PC-9 (cell line): ENCODE measurements at regions of chr2 and their contacts with region 1.

Region 1: DNA sequence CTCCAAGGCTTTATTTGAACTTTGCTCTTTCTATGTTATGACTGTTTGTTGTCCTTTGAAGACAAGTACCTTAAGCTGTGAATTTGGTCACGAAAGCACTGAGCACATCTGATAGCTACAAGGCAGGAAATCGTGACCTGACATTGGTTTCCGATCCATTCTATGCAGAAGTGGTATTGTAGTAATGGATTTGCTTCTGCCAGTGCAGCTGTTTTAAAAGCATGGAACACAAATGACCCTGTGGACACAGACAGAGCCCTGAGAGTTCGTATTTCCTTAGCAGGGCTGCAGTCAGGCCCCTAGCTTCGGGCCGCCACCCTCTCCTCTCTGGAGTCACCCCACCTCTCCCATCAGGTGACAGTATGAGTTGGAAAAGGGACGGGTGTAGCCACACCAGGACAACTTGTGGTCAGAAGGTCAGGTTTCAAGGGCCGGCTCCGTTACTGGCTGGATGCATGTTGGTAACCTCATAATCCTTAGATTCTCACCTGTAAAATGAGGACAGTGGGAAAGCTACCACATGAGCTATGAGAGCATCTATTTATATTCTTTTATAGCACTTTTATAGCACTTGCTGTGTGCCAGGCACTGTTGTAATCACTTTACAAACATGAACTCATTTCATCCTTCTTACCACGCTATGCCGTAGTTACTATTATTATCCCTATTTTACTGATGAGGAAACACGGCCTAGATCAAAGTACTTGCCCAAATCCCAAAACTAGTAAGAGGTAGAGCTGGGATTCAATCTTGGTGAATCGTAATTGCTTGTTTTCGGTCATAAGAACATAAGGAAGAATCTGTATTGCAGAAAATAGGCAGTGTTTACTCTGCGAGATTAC is 70.2 kb downstream of the SPATS2L start:
- DNase-seq: peak; percentile 70 to 88
- H3K4me3 ChIP-seq: peak overlapping the region; percentile 59; the same call in 1 of the 2 replicates
- H3K27ac ChIP-seq: peak overlapping the region; percentile 96
- H3K4me1 ChIP-seq: peaks cover 100% of the 10 kb centered on the region
- H3K27me3 ChIP-seq: no peaks in the 10 kb centered on the region
- CTCF ChIP-seq: no peak

Region 2: GRCh38 chr2:200259577-200260008 is 117.1 kb before region 1 on chr2:
- CTCF ChIA-PET with region 1: no interaction called
- POLR2A ChIA-PET with region 1: no interaction called
- intact Hi-C with region 1: loop called (anchors 1 kb)
- DNase-seq: peak; percentile 56 to 99
- H3K4me3 ChIP-seq: peak overlapping the region; percentile 39; the same call in 1 of the 2 replicates
- H3K27ac ChIP-seq: peak overlapping the region; percentile 86
- H3K4me1 ChIP-seq: peaks cover 38% of the 10 kb centered on the region
- H3K27me3 ChIP-seq: no peaks in the 10 kb centered on the region
- CTCF ChIP-seq: no peak

Region 3: GRCh38 chr2:200288658-200289427 is 87.9 kb before region 1 on chr2:
- CTCF ChIA-PET with region 1: no interaction called
- POLR2A ChIA-PET with region 1: no interaction called
- intact Hi-C with region 1: no loop called
- DNase-seq: peak in 1 of 2 experiments; percentile 41
- H3K4me3 ChIP-seq: no peak overlapping the region
- H3K27ac ChIP-seq: no peak overlapping the region; the same call in 1 of the 2 replicates
- H3K4me1 ChIP-seq: peaks cover 12% of the 10 kb centered on the region
- H3K27me3 ChIP-seq: no peaks in the 10 kb centered on the region
- CTCF ChIP-seq: no peak

Region 4: GRCh38 chr2:200306196-200306930 is 70.4 kb before region 1 on chr2 and contains the start of gene SPATS2L:
- CTCF ChIA-PET with region 1: interaction called, 3 read pairs
- POLR2A ChIA-PET with region 1: interaction called, 4 read pairs
- intact Hi-C with region 1: loop called (anchors 2 kb)
- DNase-seq: peak; percentile 63 to 76
- H3K4me3 ChIP-seq: peak within 1 kb of the TSS; percentile 86
- H3K27ac ChIP-seq: peak within 1 kb of the TSS; percentile 84
- H3K4me1 ChIP-seq: peaks cover 70% of the 10 kb centered on the region
- H3K27me3 ChIP-seq: no peaks in the 10 kb centered on the region
- CTCF ChIP-seq: 0 out of 2 replicates have a peak, but pooled peaks have one; percentile 28
- total RNA-seq, gene SPATS2L: 189 and 199 TPM in 2 replicates

Region 5: DNA sequence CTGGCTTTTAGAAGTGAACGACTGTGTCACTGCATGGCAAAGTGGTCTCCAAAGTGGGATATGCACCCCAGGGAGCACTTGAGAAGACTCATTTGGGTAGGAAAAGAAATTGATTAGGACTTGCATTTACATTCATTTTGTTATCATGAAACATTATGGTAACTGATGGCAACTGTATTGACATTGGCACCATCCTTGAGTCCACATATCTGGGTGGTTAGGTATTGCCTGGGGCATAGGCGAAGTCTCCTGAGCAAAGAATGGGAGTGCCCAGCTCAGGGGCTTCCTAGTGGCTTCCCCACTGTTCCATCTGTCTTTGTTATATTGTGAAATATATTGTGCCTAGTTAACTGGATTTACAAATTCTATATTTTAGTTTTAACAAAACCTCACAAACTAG is 41.1 kb before region 1 on chr2:
- CTCF ChIA-PET with region 1: no interaction called
- POLR2A ChIA-PET with region 1: no interaction called
- intact Hi-C with region 1: loop called (anchors 2 kb)
- DNase-seq: peak; percentile 64 to 80
- H3K4me3 ChIP-seq: no peak overlapping the region
- H3K27ac ChIP-seq: no peak overlapping the region
- H3K4me1 ChIP-seq: peaks cover 13% of the 10 kb centered on the region
- H3K27me3 ChIP-seq: no peaks in the 10 kb centered on the region
- CTCF ChIP-seq: no peak

Region 6: DNA sequence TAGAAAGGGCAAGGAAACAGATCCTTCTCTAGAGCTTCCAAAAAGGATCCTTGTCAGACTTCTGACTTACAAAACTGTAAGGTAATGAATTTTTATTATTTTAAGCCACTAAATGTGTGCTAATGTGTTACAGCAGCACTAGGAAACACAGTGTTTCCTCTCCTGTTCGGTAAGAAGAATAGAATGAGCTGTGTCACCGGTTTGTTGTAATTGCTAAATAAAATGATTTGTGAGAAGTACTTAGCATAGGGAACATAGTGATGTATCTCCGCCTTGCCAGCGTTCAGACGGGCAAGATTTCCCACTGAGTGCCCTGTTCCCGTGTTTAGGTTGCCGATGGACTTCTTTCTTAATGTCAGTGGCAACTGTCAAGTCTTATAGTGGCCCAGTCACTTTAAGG is 12.6 kb before region 1 on chr2:
- CTCF ChIA-PET with region 1: interaction called, 4 read pairs
- POLR2A ChIA-PET with region 1: interaction called, 25 read pairs
- intact Hi-C with region 1: no loop called
- DNase-seq: no peak
- H3K4me3 ChIP-seq: no peak overlapping the region
- H3K27ac ChIP-seq: no peak overlapping the region
- H3K4me1 ChIP-seq: peaks cover 24% of the 10 kb centered on the region
- H3K27me3 ChIP-seq: no peaks in the 10 kb centered on the region
- CTCF ChIP-seq: no peak